ENCODE measurements at regions of chrX and their contacts with region 1.

Region 1: GRCh38 chrX:29535212-29536162 is 679.9 kb upstream of the MAGEB2 start:
- DNase-seq: peak; percentile 19
- H3K4me3 ChIP-seq: no peak overlapping the region
- H3K27ac ChIP-seq: no peak overlapping the region
- H3K4me1 ChIP-seq: peaks cover under 1% of the 10 kb centered on the region
- H3K27me3 ChIP-seq: no peaks in the 10 kb centered on the region
- CTCF ChIP-seq: no peak

Region 2: GRCh38 chrX:29348288-29348687 is 187.2 kb before region 1 on chrX:
- CTCF ChIA-PET with region 1: interaction called, 23 read pairs
- dilution Hi-C with region 1: no loop called
- in situ Hi-C with region 1: no loop called
- intact Hi-C with region 1: no loop called
- DNase-seq: no peak
- H3K4me3 ChIP-seq: no peak overlapping the region
- H3K27ac ChIP-seq: no peak overlapping the region
- H3K4me1 ChIP-seq: no peaks in the 10 kb centered on the region
- H3K27me3 ChIP-seq: no peaks in the 10 kb centered on the region
- CTCF ChIP-seq: no peak

Region 3: GRCh38 chrX:29634516-29634915 is 99.0 kb after region 1 on chrX:
- CTCF ChIA-PET with region 1: no interaction called
- dilution Hi-C with region 1: no loop called
- in situ Hi-C with region 1: no loop called
- intact Hi-C with region 1: no loop called
- DNase-seq: peak; percentile 26
- H3K4me3 ChIP-seq: no peak overlapping the region
- H3K27ac ChIP-seq: no peak overlapping the region
- H3K4me1 ChIP-seq: no peaks in the 10 kb centered on the region
- H3K27me3 ChIP-seq: no peaks in the 10 kb centered on the region
- CTCF ChIP-seq: no peak

Measured in mammary epithelial cell (primary cell).